PC-9 (cell line): ENCODE measurements at regions of chr12 and their contacts with region 1.

Region 1: GRCh38 chr12:114616081-114616480 is 67.9 kb downstream of the TBX3 start:
- DNase-seq: no peak
- H3K4me3 ChIP-seq: no peak overlapping the region
- H3K27ac ChIP-seq: no peak overlapping the region
- H3K4me1 ChIP-seq: no peaks in the 10 kb centered on the region
- H3K27me3 ChIP-seq: peaks cover 39% of the 10 kb centered on the region
- CTCF ChIP-seq: no peak

Region 2: DNA sequence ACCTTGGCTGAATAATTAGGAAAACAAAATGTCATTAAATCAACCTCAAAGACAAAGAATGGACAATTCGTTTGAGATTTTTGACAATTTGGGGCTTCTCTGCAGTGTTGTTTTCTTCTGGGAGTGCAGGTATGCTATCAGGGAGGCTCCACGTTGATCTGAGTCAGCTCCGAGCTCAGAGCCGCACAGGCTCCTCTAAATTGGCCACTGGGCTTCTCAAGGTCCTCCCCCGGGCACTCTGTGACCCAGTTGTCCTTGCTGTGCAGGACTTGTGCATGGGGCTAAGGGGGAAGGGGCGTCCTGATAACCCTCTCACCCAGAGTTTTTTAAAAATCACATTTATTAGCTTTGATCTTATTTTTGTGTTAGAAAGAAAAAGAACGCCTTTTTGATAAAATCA is 15.2 kb after region 1 on chr12:
- CTCF ChIA-PET with region 1: interaction called, 17 read pairs
- POLR2A ChIA-PET with region 1: no interaction called
- intact Hi-C with region 1: no loop called
- DNase-seq: no peak
- H3K4me3 ChIP-seq: no peak overlapping the region
- H3K27ac ChIP-seq: no peak overlapping the region
- H3K4me1 ChIP-seq: no peaks in the 10 kb centered on the region
- H3K27me3 ChIP-seq: peaks cover 38% of the 10 kb centered on the region
- CTCF ChIP-seq: no peak

Region 3: GRCh38 chr12:114684098-114684869 is 68.2 kb after region 1 on chr12 and contains the start of gene TBX3:
- CTCF ChIA-PET with region 1: no interaction called
- POLR2A ChIA-PET with region 1: no interaction called
- intact Hi-C with region 1: no loop called
- DNase-seq: no peak
- H3K4me3 ChIP-seq: no peak within 1 kb of the TSS
- H3K27ac ChIP-seq: no peak within 1 kb of the TSS
- H3K4me1 ChIP-seq: no peaks in the 10 kb centered on the region
- H3K27me3 ChIP-seq: peaks cover 88% of the 10 kb centered on the region
- CTCF ChIP-seq: no peak
- total RNA-seq, gene TBX3: not detected in 2 replicates